Calu3 (cell line): ENCODE measurements at regions of chr12 and their contacts with region 1.

Region 1: DNA sequence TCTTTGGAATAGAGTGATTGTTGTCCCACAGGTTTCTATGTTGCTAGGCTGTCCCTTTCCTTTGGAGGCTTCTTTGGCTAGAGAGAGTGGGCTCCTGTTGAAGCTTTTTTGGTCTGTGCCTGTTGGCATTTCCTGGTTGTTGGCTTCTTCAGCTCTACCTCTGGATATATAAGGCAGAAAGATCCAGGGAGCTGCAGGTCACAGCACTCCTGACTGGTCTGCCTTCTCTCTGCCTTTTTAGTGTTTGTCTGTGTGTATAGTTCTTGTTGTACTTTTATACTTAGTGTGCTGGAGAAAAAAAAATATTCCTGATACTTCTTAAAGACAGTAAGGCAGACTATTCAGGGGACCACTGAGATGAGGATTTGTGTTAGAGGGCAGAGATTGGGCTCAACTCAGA is 202.7 kb downstream of the FBXL14 start:
- DNase-seq: no peak
- H3K4me3 Mint-ChIP-seq: no peak overlapping the region
- H3K27ac Mint-ChIP-seq: no peak overlapping the region
- H3K4me1 Mint-ChIP-seq: no peaks in the 10 kb centered on the region
- H3K27me3 Mint-ChIP-seq: no peaks in the 10 kb centered on the region
- CTCF ChIP-seq: no peak

Region 2: DNA sequence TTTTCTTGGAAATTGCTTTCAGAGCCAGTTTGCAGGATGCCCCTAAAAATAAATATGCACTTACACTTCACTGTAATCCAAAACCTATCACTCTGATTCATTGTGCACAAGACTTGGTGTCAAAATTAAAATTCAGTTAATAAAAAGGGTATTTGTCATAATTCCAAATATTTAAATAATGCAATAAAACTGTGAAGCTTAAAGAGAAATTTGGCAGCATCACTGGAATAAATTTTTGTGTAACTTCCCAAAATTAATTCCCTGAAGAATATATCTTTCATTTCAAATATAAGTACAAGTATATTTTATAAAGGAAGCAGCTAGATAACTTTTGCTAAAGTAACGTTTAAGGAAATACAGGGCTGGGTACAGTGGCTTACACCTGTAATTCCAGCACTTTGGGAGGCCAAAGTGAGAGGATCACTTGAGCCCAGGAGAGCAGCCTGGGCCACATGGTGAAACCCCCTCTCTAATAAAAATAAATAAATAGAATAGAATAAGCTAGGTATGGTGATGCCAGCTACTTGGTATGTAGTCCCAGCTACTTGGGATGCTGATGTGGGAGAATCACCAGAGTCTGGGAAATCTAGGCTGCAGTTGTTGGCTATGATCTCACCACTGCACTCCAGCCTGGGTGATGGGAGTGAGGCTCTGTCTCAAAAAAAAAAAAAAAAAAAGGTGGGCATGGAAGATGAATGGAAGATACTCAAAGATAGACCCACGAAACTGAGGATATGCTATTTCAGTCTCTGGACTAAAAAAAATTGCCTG is 31.1 kb before region 1 on chr12:
- CTCF ChIA-PET with region 1: interaction called, 11 read pairs
- intact Hi-C with region 1: no loop called
- DNase-seq: no peak
- H3K4me3 Mint-ChIP-seq: no peak overlapping the region
- H3K27ac Mint-ChIP-seq: no peak overlapping the region
- H3K4me1 Mint-ChIP-seq: no peaks in the 10 kb centered on the region
- H3K27me3 Mint-ChIP-seq: no peaks in the 10 kb centered on the region
- CTCF ChIP-seq: no peak

Region 3: GRCh38 chr12:1732914-1733313 is 341.2 kb after region 1 on chr12:
- CTCF ChIA-PET with region 1: no interaction called
- intact Hi-C with region 1: no loop called
- DNase-seq: no peak
- H3K4me3 Mint-ChIP-seq: no peak overlapping the region
- H3K27ac Mint-ChIP-seq: no peak overlapping the region
- H3K4me1 Mint-ChIP-seq: peaks cover 17% of the 10 kb centered on the region
- H3K27me3 Mint-ChIP-seq: no peaks in the 10 kb centered on the region
- CTCF ChIP-seq: no peak